Activated B cell treated with CpG ODN at 0.5 μM for 24 hours (primary cell): ENCODE measurements at regions of chr2 and their contacts with region 1.

Region 1: DNA sequence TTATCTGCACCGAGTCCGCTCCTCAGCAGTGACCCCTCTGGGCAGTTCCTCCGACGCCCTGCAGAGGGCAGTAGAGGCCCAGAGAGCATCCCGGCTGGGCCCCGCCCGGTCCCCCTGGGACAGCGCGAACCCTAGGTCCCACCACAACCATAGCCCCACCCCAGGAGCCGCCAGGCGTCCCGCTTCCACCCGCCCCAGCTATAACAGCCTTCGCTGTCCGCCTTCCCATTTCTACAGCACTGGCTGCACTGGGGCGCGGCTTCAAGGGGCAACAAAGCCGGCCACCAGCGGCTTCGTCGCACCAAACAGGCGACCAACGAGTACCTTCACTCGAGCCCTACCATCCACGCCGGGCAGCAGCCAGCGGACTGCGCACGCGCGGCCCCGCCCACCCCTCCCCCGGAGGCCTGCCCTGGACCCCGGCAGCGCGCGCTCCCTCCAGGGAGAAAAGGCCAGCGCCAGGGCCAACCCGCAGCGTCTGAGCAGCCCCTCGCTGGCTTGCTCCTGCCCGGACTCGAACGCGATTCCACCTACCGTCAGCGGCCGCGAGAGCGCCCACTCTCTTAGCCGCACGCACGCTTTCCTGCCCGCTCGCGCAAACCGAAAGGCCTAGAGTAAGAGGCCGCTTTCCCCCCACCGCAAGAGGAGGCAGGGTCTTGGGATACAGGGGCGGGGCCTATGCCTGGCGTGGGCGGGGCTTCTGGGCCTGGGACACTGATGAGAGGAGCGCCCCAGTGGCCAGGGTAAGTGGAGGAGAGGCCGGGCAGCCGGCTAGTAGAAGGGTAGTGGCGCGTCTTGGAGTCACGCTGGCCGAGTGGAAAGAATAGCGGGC is at the start of gene NHEJ1:
- DNase-seq: peak; percentile 96
- ATAC-seq: peak; percentile 87
- H3K4me3 Mint-ChIP-seq: peak within 1 kb of the TSS; percentile 96
- H3K27ac Mint-ChIP-seq: peak within 1 kb of the TSS; percentile 98
- H3K4me1 Mint-ChIP-seq: peaks cover 16% of the 10 kb centered on the region
- H3K27me3 Mint-ChIP-seq: no peaks in the 10 kb centered on the region
- CTCF ChIP-seq: peak; percentile 42
- total RNA-seq, gene NHEJ1: 19.1 and 25.0 TPM in 2 replicates

Region 2: GRCh38 chr2:218908721-218909619 is 251.4 kb before region 1 on chr2:
- CTCF ChIA-PET with region 1: no interaction called
- POLR2A ChIA-PET with region 1: no interaction called
- intact Hi-C with region 1: loop called (anchors 1 kb)
- DNase-seq: peak; percentile 82
- ATAC-seq: peak; percentile 98
- H3K4me3 Mint-ChIP-seq: peak overlapping the region; percentile 84
- H3K27ac Mint-ChIP-seq: peak overlapping the region; percentile 59
- H3K4me1 Mint-ChIP-seq: peaks cover 9% of the 10 kb centered on the region
- H3K27me3 Mint-ChIP-seq: peaks cover 12% of the 10 kb centered on the region
- CTCF ChIP-seq: no peak

Region 3: DNA sequence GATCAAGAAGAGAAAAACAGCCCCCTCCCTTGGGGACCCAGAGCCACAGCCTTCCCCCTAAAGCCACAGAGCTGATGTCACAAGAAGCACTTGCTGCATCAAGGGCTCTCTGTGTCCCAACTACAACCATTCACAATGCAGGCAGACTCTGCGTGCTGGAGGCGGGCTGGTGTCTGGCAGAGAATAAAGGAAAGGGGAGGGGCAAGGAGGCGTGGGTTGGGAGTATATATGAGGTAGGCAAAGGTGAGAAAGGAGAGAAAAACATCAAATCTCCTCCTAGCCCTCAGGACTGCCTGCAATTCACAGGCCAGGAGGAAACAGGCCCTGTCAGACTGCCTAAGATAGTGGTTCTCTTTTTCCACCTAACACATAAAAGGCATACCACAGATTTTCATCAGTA is 50.9 kb before region 1 on chr2:
- CTCF ChIA-PET with region 1: no interaction called
- POLR2A ChIA-PET with region 1: no interaction called
- intact Hi-C with region 1: no loop called
- DNase-seq: no peak
- ATAC-seq: no peak
- H3K4me3 Mint-ChIP-seq: no peak overlapping the region
- H3K27ac Mint-ChIP-seq: no peak overlapping the region
- H3K4me1 Mint-ChIP-seq: no peaks in the 10 kb centered on the region
- H3K27me3 Mint-ChIP-seq: no peaks in the 10 kb centered on the region
- CTCF ChIP-seq: no peak

Region 4: GRCh38 chr2:219206442-219207253 is 46.2 kb after region 1 on chr2 and contains the start of gene ZFAND2B:
- CTCF ChIA-PET with region 1: interaction called, 12 read pairs
- POLR2A ChIA-PET with region 1: interaction called, 7 read pairs
- intact Hi-C with region 1: loop called (anchors 1 kb)
- DNase-seq: peak; percentile 99
- ATAC-seq: peak; percentile 93
- H3K4me3 Mint-ChIP-seq: peak within 1 kb of the TSS; percentile 88
- H3K27ac Mint-ChIP-seq: peak within 1 kb of the TSS; percentile 95
- H3K4me1 Mint-ChIP-seq: peaks cover 26% of the 10 kb centered on the region
- H3K27me3 Mint-ChIP-seq: no peaks in the 10 kb centered on the region
- CTCF ChIP-seq: no peak
- total RNA-seq, gene ZFAND2B: 39.9 and 47.2 TPM in 2 replicates

Region 5: GRCh38 chr2:219245148-219245898 is 84.9 kb after region 1 on chr2 and contains the starts of genes GLB1L and STK16:
- CTCF ChIA-PET with region 1: interaction called, 3 read pairs
- POLR2A ChIA-PET with region 1: no interaction called
- intact Hi-C with region 1: loop called (anchors 1 kb)
- DNase-seq: peak; percentile 95
- ATAC-seq: peak; percentile 64
- H3K4me3 Mint-ChIP-seq: peak within 1 kb of the TSS; percentile 90
- H3K27ac Mint-ChIP-seq: peak within 1 kb of the TSS; percentile 98
- H3K4me1 Mint-ChIP-seq: peaks cover 57% of the 10 kb centered on the region
- H3K27me3 Mint-ChIP-seq: no peaks in the 10 kb centered on the region
- CTCF ChIP-seq: no peak
- total RNA-seq, gene GLB1L: 4.5 and 4.6 TPM in 2 replicates
- total RNA-seq, gene STK16: 31.0 and 36.5 TPM in 2 replicates

Region 6: GRCh38 chr2:219294356-219295351 is 134.3 kb after region 1 on chr2:
- CTCF ChIA-PET with region 1: interaction called, 50 read pairs
- POLR2A ChIA-PET with region 1: interaction called, 11 read pairs
- intact Hi-C with region 1: loop called (anchors 1 kb)
- DNase-seq: peak; percentile 91
- ATAC-seq: peak; percentile 95
- H3K4me3 Mint-ChIP-seq: peak overlapping the region; percentile 78
- H3K27ac Mint-ChIP-seq: peak overlapping the region; percentile 65
- H3K4me1 Mint-ChIP-seq: peaks cover 24% of the 10 kb centered on the region
- H3K27me3 Mint-ChIP-seq: peaks cover 6% of the 10 kb centered on the region
- CTCF ChIP-seq: peak; percentile 64

Region 7: DNA sequence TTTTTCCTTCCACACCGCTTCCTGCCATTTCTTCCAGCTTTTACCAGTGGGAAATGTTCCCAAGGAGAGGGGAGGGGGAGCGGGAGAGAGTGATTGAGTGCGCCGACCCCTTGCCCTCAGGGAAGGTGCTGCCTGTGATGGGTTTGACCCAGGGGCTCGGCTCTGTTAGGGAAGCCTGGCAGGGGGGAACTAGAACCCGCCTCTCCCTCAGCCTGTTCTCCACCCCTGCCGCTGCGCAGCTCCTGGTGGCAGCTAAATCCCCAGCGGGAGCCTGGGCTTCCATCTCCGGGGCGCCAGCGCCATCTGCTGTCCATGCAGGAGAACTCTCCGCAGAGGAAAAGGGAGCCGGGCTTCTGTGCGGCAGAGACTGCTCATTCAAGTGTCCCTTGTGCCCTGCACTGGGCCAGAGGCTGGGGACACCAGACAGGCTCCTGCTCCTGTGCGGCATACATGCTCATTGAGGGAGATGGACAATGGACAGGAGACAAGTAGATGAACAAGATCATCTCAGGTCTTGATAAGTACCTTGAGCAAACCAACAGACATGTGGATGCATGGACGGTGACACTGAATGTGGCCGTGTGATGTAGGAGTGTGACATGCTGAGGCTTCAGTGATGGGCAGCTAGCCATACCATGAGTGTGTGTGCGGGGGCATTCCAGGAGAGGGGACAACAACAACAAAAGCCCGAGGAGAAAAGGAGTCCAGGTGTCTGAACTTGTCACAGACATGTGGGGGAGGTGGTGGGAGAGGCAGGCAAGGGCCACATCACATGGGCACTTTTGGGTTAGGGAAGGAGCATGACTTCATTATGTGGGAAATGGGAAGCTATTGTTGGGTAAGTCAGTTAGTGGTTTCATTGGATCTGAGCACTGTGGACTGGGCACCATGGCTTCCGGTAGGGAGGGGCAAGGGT is 369.9 kb after region 1 on chr2:
- CTCF ChIA-PET with region 1: interaction called, 6 read pairs
- POLR2A ChIA-PET with region 1: no interaction called
- intact Hi-C with region 1: loop called (anchors 1 kb)
- DNase-seq: peak; percentile 73
- ATAC-seq: peak; percentile 97
- H3K4me3 Mint-ChIP-seq: no peak overlapping the region
- H3K27ac Mint-ChIP-seq: no peak overlapping the region
- H3K4me1 Mint-ChIP-seq: no peaks in the 10 kb centered on the region
- H3K27me3 Mint-ChIP-seq: peaks cover 60% of the 10 kb centered on the region
- CTCF ChIP-seq: peak; percentile 91